ENCODE measurements at regions of chr6 and their contacts with region 1.

Region 1: GRCh38 chr6:85323435-85324040 is 126.3 kb upstream of the NT5E start:
- DNase-seq: peak; percentile 66
- H3K4me3 ChIP-seq: no peak overlapping the region
- H3K27ac ChIP-seq: no peak overlapping the region
- H3K4me1 ChIP-seq: no peaks in the 10 kb centered on the region
- H3K27me3 ChIP-seq: no peaks in the 10 kb centered on the region
- CTCF ChIP-seq: peak; percentile 90 to 91

Region 2: DNA sequence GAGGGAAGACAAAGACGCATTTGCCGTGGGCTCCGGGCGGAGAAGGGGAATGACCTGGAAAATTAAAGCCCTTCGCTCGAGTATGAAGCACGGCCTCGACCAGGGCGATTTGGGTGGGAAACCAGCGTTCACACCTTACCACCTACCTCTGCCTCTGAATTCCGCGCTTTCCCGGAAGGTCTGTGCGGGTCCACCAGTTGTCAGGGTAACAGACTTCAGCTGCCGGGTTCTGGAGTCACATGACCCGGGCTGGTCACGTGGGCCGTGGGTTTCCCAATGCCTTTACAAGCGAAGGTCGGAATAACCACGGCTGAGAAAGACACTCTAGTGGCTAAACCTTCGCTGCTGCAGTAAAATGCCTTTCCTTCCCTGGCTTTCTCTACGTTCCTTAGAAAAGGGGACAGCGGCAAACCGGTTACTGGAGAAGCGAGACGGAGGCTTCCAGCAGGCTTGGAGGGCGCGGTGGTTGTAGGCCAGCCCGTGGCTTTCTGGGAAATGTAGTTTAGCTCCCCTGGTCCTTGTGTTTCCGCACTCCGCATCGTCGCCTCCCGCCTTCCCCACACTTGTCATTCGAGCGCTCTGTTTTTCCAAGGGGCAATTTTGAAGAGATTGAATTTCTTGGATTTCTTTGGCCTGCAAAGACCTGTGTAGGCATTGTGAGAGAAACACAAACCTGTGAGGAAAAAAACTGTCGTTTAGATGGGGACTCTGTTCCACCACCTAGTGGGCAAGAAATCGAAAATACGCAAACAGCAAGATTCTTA is 1095.9 kb before region 1 on chr6 and contains the start of gene CEP162:
- CTCF ChIA-PET with region 1: no interaction called
- dilution Hi-C with region 1: no loop called
- in situ Hi-C with region 1: no loop called
- intact Hi-C with region 1: loop called (anchors 2 kb)
- DNase-seq: peak; percentile 82
- H3K4me3 ChIP-seq: peak within 1 kb of the TSS; percentile 78 to 83 (median 79)
- H3K27ac ChIP-seq: peak within 1 kb of the TSS; percentile 55
- H3K4me1 ChIP-seq: no peaks in the 10 kb centered on the region
- H3K27me3 ChIP-seq: no peaks in the 10 kb centered on the region
- CTCF ChIP-seq: peak; percentile 74 to 75
- total RNA-seq, gene CEP162: 4.3 to 5.0 TPM

Region 3: GRCh38 chr6:84422380-84422968 is 901.1 kb before region 1 on chr6:
- CTCF ChIA-PET with region 1: interaction called, 4 read pairs
- dilution Hi-C with region 1: no loop called
- in situ Hi-C with region 1: loop called (anchors 25 kb)
- intact Hi-C with region 1: loop called (anchors 1 kb)
- DNase-seq: peak; percentile 21
- H3K4me3 ChIP-seq: no peak overlapping the region
- H3K27ac ChIP-seq: no peak overlapping the region
- H3K4me1 ChIP-seq: no peaks in the 10 kb centered on the region
- H3K27me3 ChIP-seq: peaks cover 20% of the 10 kb centered on the region
- CTCF ChIP-seq: peak; percentile 88 to 96

Region 4: DNA sequence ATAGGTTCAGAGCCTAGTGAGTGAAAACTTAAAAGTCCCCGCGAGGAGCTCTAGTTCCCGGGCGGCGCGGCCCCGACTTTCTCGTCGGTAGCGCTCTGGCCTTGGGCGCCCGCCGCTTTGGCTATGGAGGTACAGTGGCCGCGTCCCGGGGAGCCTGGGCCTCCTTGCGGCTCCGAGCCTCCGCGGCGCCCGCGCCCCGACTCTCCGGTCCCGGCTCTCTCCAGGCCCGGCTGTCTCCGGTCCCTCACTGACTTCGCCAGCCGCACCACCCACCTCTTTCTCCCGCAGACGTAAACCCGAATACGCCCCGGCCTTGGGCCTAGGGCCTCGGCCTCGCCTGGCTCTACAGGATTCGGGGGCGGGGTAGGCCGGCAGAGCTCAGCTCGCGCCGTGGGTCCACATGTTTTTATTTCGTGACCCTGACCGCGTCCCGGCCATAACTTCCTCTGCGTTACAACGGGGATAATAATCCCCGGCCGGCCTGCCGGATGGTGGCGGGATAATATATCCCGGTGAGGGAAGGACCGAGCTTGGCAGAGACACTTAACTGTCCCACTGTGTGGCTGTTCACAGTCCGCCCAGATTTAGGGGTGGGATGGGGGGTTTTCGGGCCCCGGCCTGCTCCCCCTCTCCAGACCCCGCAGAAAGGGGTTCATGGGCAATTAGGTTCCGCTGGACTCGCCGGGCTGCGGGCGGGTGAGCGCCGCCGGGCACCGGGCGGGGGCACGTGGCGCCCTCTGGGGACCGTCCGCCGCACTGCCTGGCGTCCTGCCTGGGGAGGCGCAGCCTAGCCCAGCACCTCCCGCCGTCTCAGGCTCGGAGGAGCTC is 549.2 kb before region 1 on chr6:
- CTCF ChIA-PET with region 1: no interaction called
- dilution Hi-C with region 1: no loop called
- in situ Hi-C with region 1: no loop called
- intact Hi-C with region 1: loop called (anchors 5 kb)
- DNase-seq: peak; percentile 47
- H3K4me3 ChIP-seq: peak overlapping the region in 1 of 3 experiments; percentile 33
- H3K27ac ChIP-seq: no peak overlapping the region
- H3K4me1 ChIP-seq: peaks cover 13% of the 10 kb centered on the region
- H3K27me3 ChIP-seq: peaks cover 47% of the 10 kb centered on the region
- CTCF ChIP-seq: peak; percentile 37 to 62

Region 5: DNA sequence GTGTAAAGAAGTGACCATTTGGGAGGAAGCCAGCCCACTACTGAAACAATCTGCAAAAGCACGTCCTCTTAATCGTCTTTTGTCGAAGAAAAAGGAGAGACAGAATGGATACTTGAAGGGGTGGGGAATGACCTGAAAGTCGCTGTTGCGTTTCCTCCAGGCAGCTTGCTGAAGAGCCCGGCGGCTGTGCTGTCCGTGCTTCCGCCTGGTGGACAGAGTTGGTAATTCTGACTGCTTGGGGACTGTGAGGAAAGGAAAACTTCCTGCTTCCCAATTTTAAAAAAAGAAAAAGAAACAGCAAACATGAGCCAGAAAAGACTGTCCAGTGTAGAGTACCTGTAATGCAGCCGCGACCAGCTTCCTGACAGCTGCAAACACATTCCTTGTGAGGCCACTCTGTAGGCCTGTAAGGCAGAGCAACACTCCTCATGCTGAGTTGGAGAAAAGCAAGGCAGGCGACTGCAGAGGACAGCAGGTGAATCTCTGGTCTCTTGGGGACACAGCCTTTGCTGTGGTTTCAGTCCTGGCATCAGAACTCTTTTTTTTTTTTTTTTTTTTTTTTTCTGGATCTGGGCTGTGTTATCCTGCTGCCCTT is 308.0 kb before region 1 on chr6:
- CTCF ChIA-PET with region 1: no interaction called
- dilution Hi-C with region 1: no loop called
- in situ Hi-C with region 1: no loop called
- intact Hi-C with region 1: loop called (anchors 1 kb)
- DNase-seq: no peak
- H3K4me3 ChIP-seq: no peak overlapping the region
- H3K27ac ChIP-seq: no peak overlapping the region
- H3K4me1 ChIP-seq: no peaks in the 10 kb centered on the region
- H3K27me3 ChIP-seq: peaks cover 2% of the 10 kb centered on the region
- CTCF ChIP-seq: peak; percentile 68 to 80

Region 6: DNA sequence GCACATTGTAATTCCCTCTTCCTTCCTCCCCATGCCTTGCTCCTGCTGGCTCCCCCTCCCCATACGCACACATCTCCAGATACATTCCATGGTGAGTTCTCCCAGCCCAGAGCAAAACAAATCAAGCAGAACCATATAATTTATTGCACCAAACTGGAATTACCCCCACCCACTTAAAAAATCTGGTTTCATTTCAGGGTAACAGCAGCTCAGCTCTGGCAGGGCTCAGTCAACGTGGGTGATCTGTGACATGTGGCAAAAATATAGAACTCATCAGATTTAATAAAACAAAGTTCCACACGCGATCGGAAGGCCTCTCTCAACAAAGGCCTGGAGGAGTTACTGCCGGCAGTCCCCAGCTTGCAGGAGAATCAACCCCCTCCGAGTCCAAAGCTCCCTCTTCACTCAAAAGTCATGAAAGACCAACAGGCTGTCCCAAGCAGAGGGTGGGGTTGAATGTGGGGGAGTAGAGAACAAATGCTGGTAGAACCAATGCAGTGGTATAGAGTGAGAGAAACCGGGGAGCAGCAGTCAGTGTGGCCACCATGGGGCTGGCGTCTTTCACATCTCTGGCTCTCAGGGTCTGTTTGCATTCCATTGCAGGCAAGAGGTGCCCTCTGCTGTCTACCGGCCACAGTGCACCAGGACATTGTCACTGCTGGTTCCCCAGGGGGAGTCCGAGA is 196.9 kb before region 1 on chr6:
- CTCF ChIA-PET with region 1: no interaction called
- dilution Hi-C with region 1: no loop called
- in situ Hi-C with region 1: no loop called
- intact Hi-C with region 1: loop called (anchors 2 kb)
- DNase-seq: peak; percentile 32
- H3K4me3 ChIP-seq: no peak overlapping the region
- H3K27ac ChIP-seq: no peak overlapping the region
- H3K4me1 ChIP-seq: no peaks in the 10 kb centered on the region
- H3K27me3 ChIP-seq: peaks cover 2% of the 10 kb centered on the region
- CTCF ChIP-seq: peak; percentile 64 to 81

Region 7: GRCh38 chr6:85250586-85251220 is 72.8 kb before region 1 on chr6:
- CTCF ChIA-PET with region 1: no interaction called
- dilution Hi-C with region 1: loop called (anchors 5 kb)
- in situ Hi-C with region 1: no loop called
- intact Hi-C with region 1: no loop called
- DNase-seq: no peak
- H3K4me3 ChIP-seq: no peak overlapping the region
- H3K27ac ChIP-seq: no peak overlapping the region
- H3K4me1 ChIP-seq: no peaks in the 10 kb centered on the region
- H3K27me3 ChIP-seq: no peaks in the 10 kb centered on the region
- CTCF ChIP-seq: no peak

Measured in mammary epithelial cell (primary cell).